ENCODE measurements at regions of chr2 and their contacts with region 1.

Region 1: DNA sequence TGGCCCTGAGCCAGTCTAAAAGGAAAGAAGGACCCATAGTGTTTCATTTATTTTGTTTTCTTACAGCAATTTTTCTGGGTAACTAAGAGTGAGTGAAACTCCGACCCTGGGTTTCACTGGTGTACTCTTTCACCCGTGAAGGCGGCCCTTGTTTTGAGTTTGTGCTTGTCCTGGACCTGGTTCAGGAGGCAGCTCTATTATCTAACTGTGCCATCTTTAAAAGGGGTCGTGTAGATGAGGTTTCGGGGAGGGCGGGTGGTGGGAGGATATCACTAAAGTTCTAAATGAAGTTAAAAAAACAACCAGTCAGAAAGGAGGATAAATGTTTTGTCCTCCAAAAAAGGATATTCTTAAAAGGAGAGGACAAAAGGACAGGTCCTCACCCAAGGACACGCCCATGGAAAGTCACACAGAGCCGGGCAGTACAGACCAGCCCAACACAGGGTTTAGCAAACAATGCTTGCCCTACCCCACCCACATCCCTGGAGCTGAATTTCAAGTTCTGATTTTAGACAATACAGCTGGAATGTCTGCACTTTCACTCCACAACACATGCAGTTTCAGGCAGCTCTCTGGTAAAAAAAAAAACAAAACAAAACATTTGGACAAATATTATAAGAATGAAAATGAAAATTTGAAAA is 67.7 kb downstream of the SLC9A4 start:
- DNase-seq: peak in 1 of 2 donors; percentile 21
- ATAC-seq: peak in 3 of 8 donors; percentile 50 to 83 (median 51)
- H3K4me3 ChIP-seq: no peak overlapping the region
- H3K27ac ChIP-seq: no peak overlapping the region
- H3K4me1 ChIP-seq: no peaks in the 10 kb centered on the region
- H3K27me3 ChIP-seq: no peaks in the 10 kb centered on the region
- CTCF ChIP-seq: no peak

Region 2: DNA sequence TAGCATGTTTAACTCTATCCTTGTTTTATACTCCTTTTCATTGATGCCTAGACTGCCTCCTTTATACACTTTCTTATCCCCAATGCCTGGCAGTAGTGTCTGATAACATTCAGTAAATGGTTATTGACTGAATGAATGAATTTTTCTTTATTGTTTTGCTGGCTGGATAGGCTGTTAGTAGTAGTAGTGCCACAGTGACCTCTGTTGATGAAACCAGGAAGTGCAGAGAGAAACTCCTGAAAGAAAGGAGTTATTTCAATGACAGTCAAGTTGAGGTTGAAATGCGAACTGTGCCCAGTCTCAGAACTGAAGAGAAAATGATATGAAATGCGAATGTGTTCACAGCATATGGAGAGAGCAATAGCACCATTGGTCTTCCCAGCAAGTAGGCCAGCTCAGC is 51.8 kb after region 1 on chr2:
- intact Hi-C with region 1: loop called in 1 of 10 experiments (anchors 10 kb)
- DNase-seq: no peak
- ATAC-seq: no peak
- H3K4me3 ChIP-seq: no peak overlapping the region
- H3K27ac ChIP-seq: no peak overlapping the region
- H3K4me1 ChIP-seq: no peaks in the 10 kb centered on the region
- H3K27me3 ChIP-seq: peaks cover 0 to 12% (median 0%) of the 10 kb centered on the region in 7 donors
- CTCF ChIP-seq: peak in 6 of 9 donors; percentile 18 to 56 (median 29)

Region 3: GRCh38 chr2:104447831-104448434 is 1907.2 kb after region 1 on chr2:
- intact Hi-C with region 1: loop called in 1 of 10 experiments (anchors 10 kb)
- DNase-seq: no peak
- ATAC-seq: no peak
- H3K4me3 ChIP-seq: peak overlapping the region in 4 of 10 donors; percentile 21 to 35 (median 28)
- H3K27ac ChIP-seq: no peak overlapping the region
- H3K4me1 ChIP-seq: no peaks in the 10 kb centered on the region
- H3K27me3 ChIP-seq: no peaks in the 10 kb centered on the region
- CTCF ChIP-seq: no peak